ENCODE measurements at regions of chr1 and their contacts with region 1.

Region 1: GRCh38 chr1:153568367-153569099 is 2.9 kb upstream of the S100A2 start:
- DNase-seq: peak; percentile 93
- ATAC-seq: peak; percentile 30 to 55
- H3K4me3 ChIP-seq: peak overlapping the region; percentile 35
- H3K27ac ChIP-seq: peak overlapping the region; percentile 94
- H3K4me1 ChIP-seq: peaks cover 56% of the 10 kb centered on the region
- H3K27me3 ChIP-seq: no peaks in the 10 kb centered on the region
- CTCF ChIP-seq: peak; percentile 99

Region 2: GRCh38 chr1:153081736-153082135 is 486.8 kb before region 1 on chr1:
- intact Hi-C with region 1: no loop called
- DNase-seq: no peak
- ATAC-seq: no peak
- H3K4me3 ChIP-seq: no peak overlapping the region
- H3K27ac ChIP-seq: no peak overlapping the region
- H3K4me1 ChIP-seq: no peaks in the 10 kb centered on the region
- H3K27me3 ChIP-seq: no peaks in the 10 kb centered on the region
- CTCF ChIP-seq: no peak

Region 3: GRCh38 chr1:153510984-153511410 is 57.5 kb before region 1 on chr1:
- intact Hi-C with region 1: loop called (anchors 10 kb)
- DNase-seq: peak; percentile 87
- ATAC-seq: peak; percentile 85 to 89
- H3K4me3 ChIP-seq: no peak overlapping the region
- H3K27ac ChIP-seq: no peak overlapping the region
- H3K4me1 ChIP-seq: peaks cover 18% of the 10 kb centered on the region
- H3K27me3 ChIP-seq: no peaks in the 10 kb centered on the region
- CTCF ChIP-seq: peak; percentile 93

Region 4: DNA sequence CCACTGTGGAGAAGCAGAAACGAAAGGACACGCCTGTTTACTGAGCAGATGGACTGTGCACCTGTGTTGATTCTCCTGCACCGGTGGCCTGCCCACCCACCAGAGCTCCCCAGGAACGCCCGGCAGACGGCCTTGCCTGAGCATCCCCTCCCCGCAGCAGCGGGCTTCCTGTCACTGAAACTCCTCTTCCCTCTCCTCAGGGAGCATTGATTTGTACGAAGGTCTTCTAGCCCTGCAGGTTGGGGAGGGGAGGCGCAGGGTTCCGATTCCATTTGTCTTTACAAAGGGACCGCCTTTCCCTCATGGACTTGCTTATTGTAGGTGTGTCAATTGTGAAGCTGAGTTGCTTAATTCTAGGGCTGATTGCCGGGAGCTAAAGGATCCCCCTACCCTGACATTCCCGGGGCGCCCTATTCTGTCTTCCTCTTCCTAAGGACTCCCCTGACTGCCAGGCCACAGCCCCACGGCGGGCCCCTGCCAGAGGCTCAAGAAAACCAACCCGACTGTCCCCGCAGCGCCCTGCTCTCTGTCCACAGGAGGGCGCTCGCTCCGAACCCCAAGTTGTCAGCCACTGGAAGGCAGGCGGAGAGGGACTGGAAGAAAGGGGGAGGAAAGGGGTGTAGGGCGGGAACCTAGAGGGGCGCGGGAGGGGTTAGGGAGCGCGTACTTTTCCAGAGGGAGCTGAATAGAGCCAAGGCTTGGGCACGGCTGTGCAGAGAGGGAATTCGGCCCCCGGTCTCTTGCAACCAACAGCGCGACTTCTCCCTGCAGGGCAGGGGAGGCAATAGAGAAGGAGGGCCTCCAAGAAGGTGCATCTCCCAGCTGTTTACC is 35.5 kb before region 1 on chr1:
- intact Hi-C with region 1: loop called (anchors 5 kb)
- DNase-seq: peak; percentile 92
- ATAC-seq: peak; percentile 69 to 80
- H3K4me3 ChIP-seq: peak overlapping the region; percentile 98
- H3K27ac ChIP-seq: peak overlapping the region; percentile 100
- H3K4me1 ChIP-seq: peaks cover 46% of the 10 kb centered on the region
- H3K27me3 ChIP-seq: no peaks in the 10 kb centered on the region
- CTCF ChIP-seq: peak; percentile 92

Measured in lower lobe of right lung (tissue), 2 donors.